Thyroid gland (tissue), 4 donors: ENCODE measurements at regions of chrX and their contacts with region 1.

Region 1: DNA sequence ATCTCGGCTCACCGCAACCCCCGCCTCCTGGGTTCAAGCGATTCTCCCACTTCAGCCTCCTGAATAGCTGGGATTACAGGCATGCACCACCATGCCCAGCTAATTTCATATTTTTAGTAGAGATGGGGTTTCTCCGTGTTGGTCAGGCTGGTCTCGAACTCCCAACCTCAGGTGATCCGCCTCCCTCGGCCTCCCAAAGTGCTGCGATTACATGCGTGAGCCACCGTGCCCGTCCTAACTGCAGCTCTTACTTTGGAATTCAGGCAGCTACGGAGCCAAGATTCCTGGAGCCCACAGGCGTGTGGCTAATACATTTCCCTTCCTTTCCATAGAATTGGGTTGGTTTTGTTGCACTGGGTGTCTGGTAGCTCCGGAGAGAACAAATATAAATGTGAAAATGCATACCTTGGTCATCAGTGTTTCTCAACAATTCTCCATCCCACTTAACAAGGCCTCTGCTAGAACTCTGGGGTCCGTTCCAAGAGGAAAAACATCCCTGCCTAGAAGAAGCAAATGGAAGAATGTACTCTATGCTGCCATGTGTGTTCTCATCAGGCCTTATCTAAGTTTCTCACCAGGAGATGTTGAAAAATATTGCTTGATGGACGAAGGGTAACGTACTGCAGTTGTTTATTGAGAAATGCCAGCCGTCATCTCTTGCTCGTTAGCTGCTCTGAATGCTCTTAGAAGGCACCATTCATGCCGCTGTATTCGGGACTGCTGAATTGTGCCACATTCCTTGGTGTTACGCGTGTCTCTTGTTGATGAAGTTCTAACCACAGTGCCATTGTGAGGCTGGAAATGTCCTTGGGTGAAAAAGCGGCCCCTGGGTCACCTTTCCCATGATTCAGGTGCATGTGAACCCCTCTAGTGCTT is 50.6 kb upstream of the CD99 start:
- DNase-seq: no peak
- H3K4me3 ChIP-seq: no peak overlapping the region
- H3K27ac ChIP-seq: no peak overlapping the region
- H3K4me1 ChIP-seq: no peaks in the 10 kb centered on the region
- H3K27me3 ChIP-seq: no peaks in the 10 kb centered on the region
- CTCF ChIP-seq: no peak
- POLR2A ChIP-seq: no peak

Region 2: GRCh38 chrX:2299871-2300270 is 340.6 kb before region 1 on chrX:
- intact Hi-C with region 1: no loop called
- DNase-seq: no peak
- H3K4me3 ChIP-seq: no peak overlapping the region
- H3K27ac ChIP-seq: no peak overlapping the region
- H3K4me1 ChIP-seq: peaks cover 3 to 8% of the 10 kb centered on the region in 2 donors
- H3K27me3 ChIP-seq: no peaks in the 10 kb centered on the region
- CTCF ChIP-seq: no peak
- POLR2A ChIP-seq: no peak

Region 3: GRCh38 chrX:2819345-2820135 is 179.0 kb after region 1 on chrX:
- intact Hi-C with region 1: loop called (anchors 10 kb)
- DNase-seq: no peak
- H3K4me3 ChIP-seq: no peak overlapping the region
- H3K27ac ChIP-seq: no peak overlapping the region
- H3K4me1 ChIP-seq: no peaks in the 10 kb centered on the region
- H3K27me3 ChIP-seq: no peaks in the 10 kb centered on the region
- CTCF ChIP-seq: peak in 1 of 6 experiments; percentile 14
- POLR2A ChIP-seq: no peak

Region 4: GRCh38 chrX:2875798-2876399 is 235.4 kb after region 1 on chrX:
- intact Hi-C with region 1: no loop called
- DNase-seq: no peak
- H3K4me3 ChIP-seq: no peak overlapping the region
- H3K27ac ChIP-seq: no peak overlapping the region
- H3K4me1 ChIP-seq: no peaks in the 10 kb centered on the region
- H3K27me3 ChIP-seq: no peaks in the 10 kb centered on the region
- CTCF ChIP-seq: peak in 1 of 6 experiments; percentile 17
- POLR2A ChIP-seq: no peak